GM10248 (cell line): ENCODE measurements at regions of chr15 and their contacts with region 1.

Region 1: DNA sequence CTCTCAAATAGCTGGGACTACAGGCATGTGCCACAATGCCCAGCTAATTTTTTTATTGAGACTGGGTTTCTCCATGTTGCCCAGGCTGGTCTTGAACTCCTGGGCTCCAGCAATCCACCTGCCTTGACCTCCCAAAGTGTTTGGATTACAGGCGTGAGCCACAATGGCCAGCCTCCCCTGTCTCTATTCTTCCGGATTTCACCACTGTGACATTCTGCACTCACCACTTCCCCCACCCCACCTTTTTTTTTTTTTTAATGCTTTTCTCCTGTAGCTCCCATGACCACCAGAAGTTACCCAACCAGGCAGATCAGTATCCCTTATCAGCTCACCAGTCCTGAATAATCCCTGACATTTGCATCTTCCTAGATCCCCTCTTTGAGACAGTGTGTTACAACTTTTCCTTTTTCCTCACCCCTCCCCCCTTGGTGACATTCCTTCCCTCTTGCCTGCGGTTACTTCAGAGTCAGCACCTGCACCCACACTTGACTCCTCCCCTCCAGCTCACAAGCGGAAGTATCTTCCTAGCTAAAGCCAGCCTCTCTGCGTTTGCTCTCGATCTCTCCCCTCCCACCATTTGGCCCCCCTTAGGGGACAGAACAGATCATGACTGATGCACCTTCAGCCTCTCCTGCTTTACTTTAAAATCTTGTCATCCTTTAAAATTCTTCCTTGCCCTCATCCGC is 13.5 kb upstream of the ZNF592 start:
- DNase-seq: peak; percentile 66
- CTCF ChIP-seq: no peak

Region 2: DNA sequence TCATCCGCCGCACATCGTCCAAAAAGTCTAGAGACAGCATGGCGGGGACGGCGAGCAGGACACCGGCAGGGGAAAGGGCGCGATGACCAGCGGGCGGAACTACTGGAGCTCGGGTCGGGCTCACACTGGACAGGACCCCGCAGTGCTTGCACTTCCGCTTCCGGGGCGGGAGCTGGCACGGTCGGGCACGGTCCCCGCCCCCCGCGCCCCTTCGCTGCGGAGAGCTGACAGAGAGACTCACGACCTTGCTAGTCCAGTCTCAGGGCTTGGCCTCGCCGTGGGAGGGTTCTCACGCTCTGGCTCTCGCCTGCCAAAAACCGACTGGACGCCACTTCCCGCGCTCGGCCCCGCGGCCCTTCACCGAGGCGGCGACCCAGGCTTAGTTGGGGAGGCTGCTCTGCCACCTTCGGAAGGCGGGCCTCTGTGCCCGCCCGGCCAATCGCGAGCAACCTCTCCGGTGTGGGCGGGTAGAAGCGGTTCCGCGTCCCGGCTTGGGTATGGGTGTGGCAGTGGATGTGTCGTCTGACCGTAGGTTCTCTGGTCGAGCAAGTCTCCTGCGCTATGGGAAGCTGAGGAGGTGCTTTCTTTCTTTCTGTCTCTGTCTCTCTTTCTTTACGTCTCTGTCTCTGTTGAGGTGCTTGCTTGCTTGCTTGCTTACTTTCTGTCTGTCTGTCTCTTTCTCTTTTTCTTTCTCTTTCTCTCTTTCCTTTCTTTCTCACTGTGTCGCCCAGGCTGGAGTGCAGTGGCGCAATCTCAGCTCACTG is 18.7 kb before region 1 on chr15 and contains the start of gene SEC11A:
- CTCF ChIA-PET with region 1: interaction called, 4 read pairs
- POLR2A ChIA-PET with region 1: interaction called, 12 read pairs
- DNase-seq: peak; percentile 94
- CTCF ChIP-seq: no peak